ENCODE measurements at regions of chr16 and their contacts with region 1.

Region 1: GRCh38 chr16:4682616-4683254 is 10.6 kb upstream of the NUDT16L1 start:
- DNase-seq: peak; percentile 52 to 96 (median 73)

Region 2: GRCh38 chr16:4511441-4512082 is 171.2 kb before region 1 on chr16:
- intact Hi-C with region 1: loop called (anchors 10 kb)
- DNase-seq: peak; percentile 46 to 96 (median 72)

Region 3: GRCh38 chr16:4572715-4573114 is 110.0 kb before region 1 on chr16:
- intact Hi-C with region 1: no loop called
- DNase-seq: peak in 5 of 10 donors; percentile 25 to 82 (median 39)

Region 4: DNA sequence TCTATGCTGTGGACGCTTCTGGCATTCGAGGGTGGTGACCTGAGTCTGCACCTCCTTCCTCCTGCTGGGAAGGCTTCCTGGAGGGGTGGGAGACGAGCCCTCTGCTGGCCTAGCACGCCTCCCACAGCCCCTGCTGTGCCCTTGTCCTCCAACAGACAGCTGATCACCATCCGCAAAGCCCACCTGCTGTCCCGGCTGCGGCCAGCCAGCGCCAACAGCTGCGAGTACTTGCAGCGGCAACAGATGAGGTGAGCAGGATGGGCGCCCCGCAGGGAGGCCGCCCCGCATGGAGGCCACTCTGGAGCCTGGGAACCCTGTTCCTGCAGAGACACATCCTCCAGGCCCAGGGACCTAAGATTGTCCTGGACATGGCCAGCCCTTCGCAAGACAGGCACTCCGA is 89.7 kb before region 1 on chr16:
- intact Hi-C with region 1: no loop called
- DNase-seq: no peak

Region 5: GRCh38 chr16:5186381-5186903 is 503.7 kb after region 1 on chr16:
- intact Hi-C with region 1: no loop called
- DNase-seq: no peak